Endothelial cell of umbilical vein (primary cell): ENCODE measurements at regions of chr22 and their contacts with region 1.

Region 1: DNA sequence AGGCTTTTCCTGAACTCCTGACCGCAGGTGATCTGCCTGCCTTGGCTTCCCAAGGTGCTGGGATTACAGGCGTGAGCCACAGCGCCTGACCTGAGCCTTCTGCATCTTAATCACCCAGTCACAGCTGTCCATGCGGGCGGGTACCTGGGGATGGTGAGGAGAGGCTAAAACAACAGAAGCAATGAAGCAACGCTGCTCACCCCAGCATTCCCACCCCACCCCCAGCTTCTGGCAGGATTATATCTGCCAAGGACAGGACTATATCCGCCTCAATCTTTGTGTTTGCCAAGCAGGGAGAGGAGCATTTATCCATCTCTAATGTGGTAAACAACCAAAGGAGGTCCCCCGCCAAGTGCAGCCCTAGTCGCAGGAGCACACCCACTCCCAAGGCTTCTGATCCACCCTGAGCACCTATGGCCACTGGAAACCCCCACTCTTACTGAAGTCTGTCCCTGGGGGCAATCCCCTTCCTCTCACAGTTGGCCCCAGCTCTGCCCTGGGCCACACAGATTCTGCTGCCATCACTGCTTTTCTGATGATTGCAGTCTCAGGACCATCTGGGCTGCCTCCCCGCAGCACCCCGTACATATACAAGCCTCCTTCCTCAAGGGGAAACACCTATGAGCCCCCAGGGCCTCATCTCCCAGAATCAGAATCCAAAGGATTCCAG is 8.8 kb upstream of the LGALS2 start:
- DNase-seq: no peak
- H3K4me3 ChIP-seq: no peak overlapping the region
- H3K27ac ChIP-seq: no peak overlapping the region
- H3K4me1 ChIP-seq: no peaks in the 10 kb centered on the region
- H3K27me3 ChIP-seq: peaks cover 0 to 1% of the 10 kb centered on the region in 2 experiments
- CTCF ChIP-seq: no peak
- POLR2A ChIP-seq: no peak

Region 2: GRCh38 chr22:37472418-37473006 is 116.2 kb before region 1 on chr22:
- CTCF ChIA-PET with region 1: interaction called, 18 read pairs
- POLR2A ChIA-PET with region 1: no interaction called
- dilution Hi-C with region 1: no loop called
- intact Hi-C with region 1: no loop called
- DNase-seq: no peak
- H3K4me3 ChIP-seq: no peak overlapping the region
- H3K27ac ChIP-seq: no peak overlapping the region
- H3K4me1 ChIP-seq: no peaks in the 10 kb centered on the region
- H3K27me3 ChIP-seq: no peaks in the 10 kb centered on the region
- CTCF ChIP-seq: peak; percentile 49 to 71
- POLR2A ChIP-seq: no peak

Region 3: DNA sequence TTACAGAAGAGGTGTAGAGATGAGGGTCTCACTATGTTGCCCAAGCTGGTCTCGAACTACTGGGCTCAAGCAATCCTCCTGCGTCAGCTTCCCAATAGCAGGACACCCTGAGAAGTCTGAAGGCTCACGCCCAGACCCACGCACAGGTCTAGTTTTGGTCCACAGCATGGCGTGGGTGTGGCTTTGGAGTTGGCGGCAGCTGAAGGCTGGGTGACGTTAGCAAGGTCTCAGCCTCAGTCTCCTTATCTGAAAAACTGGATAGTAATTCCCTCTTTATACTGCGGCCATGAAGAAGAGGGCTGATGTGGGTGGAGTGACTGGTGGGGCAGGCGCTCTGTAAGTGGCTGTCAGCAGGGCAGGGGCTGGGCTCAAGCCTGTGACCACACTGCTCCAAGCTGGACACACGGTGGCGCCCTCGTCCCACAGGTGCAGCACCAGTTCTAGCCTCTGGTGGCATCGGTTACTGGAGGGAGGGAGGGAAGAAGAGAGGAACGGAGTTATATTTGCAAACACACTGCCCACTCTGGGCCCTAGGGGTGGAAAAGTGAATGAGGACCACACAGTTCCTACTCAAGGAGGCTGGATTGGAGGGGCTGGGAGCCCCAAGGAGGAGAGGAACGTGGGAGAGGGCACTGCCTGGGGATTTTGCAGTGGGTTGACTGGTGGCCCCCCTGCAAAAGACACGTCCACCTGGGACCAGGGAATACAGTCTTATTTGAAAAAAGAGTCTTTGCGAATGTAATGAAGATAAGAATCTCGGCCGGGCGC is 49.9 kb before region 1 on chr22:
- CTCF ChIA-PET with region 1: interaction called, 437 read pairs
- POLR2A ChIA-PET with region 1: interaction called, 3 read pairs
- dilution Hi-C with region 1: no loop called
- intact Hi-C with region 1: loop called (anchors 1 kb)
- DNase-seq: peak; percentile 91
- H3K4me3 ChIP-seq: no peak overlapping the region
- H3K27ac ChIP-seq: no peak overlapping the region
- H3K4me1 ChIP-seq: peaks cover 3% of the 10 kb centered on the region
- H3K27me3 ChIP-seq: no peaks in the 10 kb centered on the region
- CTCF ChIP-seq: peak; percentile 95 to 98
- POLR2A ChIP-seq: no peak

Region 4: GRCh38 chr22:37561212-37562048 is 27.3 kb before region 1 on chr22:
- CTCF ChIA-PET with region 1: interaction called, 84 read pairs
- POLR2A ChIA-PET with region 1: no interaction called
- dilution Hi-C with region 1: no loop called
- intact Hi-C with region 1: no loop called
- DNase-seq: peak; percentile 88
- H3K4me3 ChIP-seq: peak overlapping the region; percentile 71 to 86 (median 74)
- H3K27ac ChIP-seq: peak overlapping the region; percentile 99
- H3K4me1 ChIP-seq: peaks cover 61% of the 10 kb centered on the region
- H3K27me3 ChIP-seq: no peaks in the 10 kb centered on the region
- CTCF ChIP-seq: peak; percentile 94
- POLR2A ChIP-seq: peak; percentile 47

Region 5: GRCh38 chr22:37575490-37576003 is 13.1 kb before region 1 on chr22:
- CTCF ChIA-PET with region 1: interaction called, 84 read pairs
- POLR2A ChIA-PET with region 1: interaction called, 3 read pairs
- dilution Hi-C with region 1: no loop called
- intact Hi-C with region 1: no loop called
- DNase-seq: no peak
- H3K4me3 ChIP-seq: no peak overlapping the region
- H3K27ac ChIP-seq: no peak overlapping the region
- H3K4me1 ChIP-seq: no peaks in the 10 kb centered on the region
- H3K27me3 ChIP-seq: no peaks in the 10 kb centered on the region
- CTCF ChIP-seq: no peak
- POLR2A ChIP-seq: no peak

Region 6: GRCh38 chr22:37608477-37609239 is 20.0 kb after region 1 on chr22 and contains the start of gene GGA1:
- CTCF ChIA-PET with region 1: interaction called, 92 read pairs
- POLR2A ChIA-PET with region 1: interaction called, 10 read pairs
- dilution Hi-C with region 1: no loop called
- intact Hi-C with region 1: no loop called
- DNase-seq: peak; percentile 99
- H3K4me3 ChIP-seq: peak within 1 kb of the TSS; percentile 46 to 83 (median 73)
- H3K27ac ChIP-seq: peak within 1 kb of the TSS; percentile 79
- H3K4me1 ChIP-seq: peaks cover 19% of the 10 kb centered on the region
- H3K27me3 ChIP-seq: peaks cover 0 to 7% of the 10 kb centered on the region in 2 experiments
- CTCF ChIP-seq: no peak
- POLR2A ChIP-seq: no peak
- total RNA-seq, gene GGA1: 55.9 and 67.5 TPM in 2 replicates